ENCODE measurements at regions of chr2 and their contacts with region 1.

Region 1: GRCh38 chr2:127649684-127650040 is 3.7 kb downstream of the GPR17 start:
- DNase-seq: peak; percentile 72 to 78 (median 73)
- H3K4me3 ChIP-seq: no peak overlapping the region
- H3K4me3 Mint-ChIP-seq: peak overlapping the region in 6 of 8 donors; percentile 38 to 70 (median 65)
- H3K27ac ChIP-seq: no peak overlapping the region
- H3K27ac Mint-ChIP-seq: peak overlapping the region in 3 of 7 donors; percentile 49 to 73 (median 52)
- H3K4me1 ChIP-seq: peaks cover 9% of the 10 kb centered on the region
- H3K4me1 Mint-ChIP-seq: peaks cover 12 to 21% (median 16%) of the 10 kb centered on the region in 4 donors
- H3K27me3 ChIP-seq: no peaks in the 10 kb centered on the region
- H3K27me3 Mint-ChIP-seq: no peaks in the 10 kb centered on the region

Region 2: GRCh38 chr2:127197475-127198385 is 451.9 kb before region 1 on chr2:
- CTCF ChIA-PET with region 1: interaction called, 8 read pairs
- POLR2A ChIA-PET with region 1: no interaction called
- intact Hi-C with region 1: loop called (anchors 1 kb)
- DNase-seq: peak in 4 of 5 donors; percentile 24 to 41 (median 34)
- H3K4me3 ChIP-seq: no peak overlapping the region
- H3K4me3 Mint-ChIP-seq: peak overlapping the region; percentile 80 to 94 (median 88)
- H3K27ac ChIP-seq: no peak overlapping the region
- H3K27ac Mint-ChIP-seq: peak overlapping the region in 3 of 7 donors; percentile 8 to 67 (median 48)
- H3K4me1 ChIP-seq: no peaks in the 10 kb centered on the region
- H3K4me1 Mint-ChIP-seq: peaks cover 0 to 7% (median 5%) of the 10 kb centered on the region in 4 donors
- H3K27me3 ChIP-seq: no peaks in the 10 kb centered on the region
- H3K27me3 Mint-ChIP-seq: no peaks in the 10 kb centered on the region

Region 3: DNA sequence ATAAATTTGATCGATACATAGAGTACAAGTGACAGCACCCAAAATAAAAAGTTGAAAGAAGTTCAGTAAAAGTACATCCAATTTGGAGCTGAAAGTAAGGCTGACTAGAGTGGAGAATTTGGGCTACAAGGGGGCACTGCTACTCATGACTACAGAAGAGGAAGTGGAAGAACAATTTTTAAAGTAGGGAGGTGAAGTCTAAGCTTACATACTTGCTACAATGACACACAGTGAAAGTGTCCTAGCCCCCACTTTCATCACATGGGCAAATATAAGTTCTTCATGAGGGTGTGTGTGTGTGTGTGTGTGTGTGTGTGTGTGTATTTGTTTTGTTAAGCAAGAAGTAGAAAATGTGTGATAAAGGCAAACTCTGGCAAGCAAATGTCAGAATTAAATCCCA is 307.6 kb before region 1 on chr2:
- CTCF ChIA-PET with region 1: no interaction called
- POLR2A ChIA-PET with region 1: no interaction called
- intact Hi-C with region 1: loop called (anchors 10 kb)
- DNase-seq: no peak
- H3K4me3 ChIP-seq: no peak overlapping the region
- H3K4me3 Mint-ChIP-seq: no peak overlapping the region
- H3K27ac ChIP-seq: no peak overlapping the region
- H3K27ac Mint-ChIP-seq: peak overlapping the region in 1 of 7 donors; percentile 4
- H3K4me1 ChIP-seq: peaks cover 1% of the 10 kb centered on the region
- H3K4me1 Mint-ChIP-seq: peaks cover 13 to 34% (median 24%) of the 10 kb centered on the region in 4 donors
- H3K27me3 ChIP-seq: no peaks in the 10 kb centered on the region
- H3K27me3 Mint-ChIP-seq: no peaks in the 10 kb centered on the region

Region 4: DNA sequence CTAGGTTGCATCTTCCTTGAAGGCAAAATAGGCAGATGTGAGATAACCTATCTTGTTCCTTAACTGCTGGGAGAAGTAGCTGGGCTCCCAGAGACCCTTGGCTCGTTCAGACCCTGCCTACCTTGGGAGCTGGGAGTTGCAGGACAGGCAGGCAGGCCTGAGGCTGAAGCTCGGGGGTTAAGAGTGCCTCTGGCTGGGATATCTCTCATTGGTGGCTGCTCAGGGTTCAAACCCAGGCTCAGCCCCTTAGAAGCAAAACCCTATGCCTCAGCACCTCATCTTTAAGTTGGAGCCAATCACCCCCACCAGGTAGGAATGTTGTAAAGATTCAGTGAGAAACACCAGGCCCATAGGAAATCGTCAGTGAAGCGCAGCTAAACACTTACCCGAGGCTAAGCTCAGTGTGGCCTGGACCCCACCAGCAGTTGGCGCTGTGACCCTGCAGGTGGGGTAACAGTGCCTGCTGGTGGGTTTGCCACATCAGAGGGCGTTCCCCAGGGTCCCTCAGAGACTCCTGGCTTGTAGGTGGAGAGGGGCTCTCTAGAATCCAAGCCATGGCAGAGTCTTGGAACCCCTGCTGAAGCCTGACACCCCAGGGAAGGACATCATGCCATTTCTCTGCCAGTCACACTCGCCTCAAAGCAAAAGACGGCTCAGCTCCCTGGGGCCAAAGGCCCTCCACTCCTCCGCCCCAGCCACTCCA is 58.3 kb before region 1 on chr2:
- CTCF ChIA-PET with region 1: interaction called, 98 read pairs
- POLR2A ChIA-PET with region 1: interaction called, 8 read pairs
- intact Hi-C with region 1: loop called (anchors 1 kb)
- DNase-seq: peak; percentile 44 to 56 (median 49)
- H3K4me3 ChIP-seq: no peak overlapping the region
- H3K4me3 Mint-ChIP-seq: no peak overlapping the region
- H3K27ac ChIP-seq: no peak overlapping the region
- H3K27ac Mint-ChIP-seq: no peak overlapping the region
- H3K4me1 ChIP-seq: no peaks in the 10 kb centered on the region
- H3K4me1 Mint-ChIP-seq: peaks cover 0 to 10% (median 2%) of the 10 kb centered on the region in 4 donors
- H3K27me3 ChIP-seq: no peaks in the 10 kb centered on the region
- H3K27me3 Mint-ChIP-seq: peaks cover 0 to 2% of the 10 kb centered on the region in 2 donors

Region 5: DNA sequence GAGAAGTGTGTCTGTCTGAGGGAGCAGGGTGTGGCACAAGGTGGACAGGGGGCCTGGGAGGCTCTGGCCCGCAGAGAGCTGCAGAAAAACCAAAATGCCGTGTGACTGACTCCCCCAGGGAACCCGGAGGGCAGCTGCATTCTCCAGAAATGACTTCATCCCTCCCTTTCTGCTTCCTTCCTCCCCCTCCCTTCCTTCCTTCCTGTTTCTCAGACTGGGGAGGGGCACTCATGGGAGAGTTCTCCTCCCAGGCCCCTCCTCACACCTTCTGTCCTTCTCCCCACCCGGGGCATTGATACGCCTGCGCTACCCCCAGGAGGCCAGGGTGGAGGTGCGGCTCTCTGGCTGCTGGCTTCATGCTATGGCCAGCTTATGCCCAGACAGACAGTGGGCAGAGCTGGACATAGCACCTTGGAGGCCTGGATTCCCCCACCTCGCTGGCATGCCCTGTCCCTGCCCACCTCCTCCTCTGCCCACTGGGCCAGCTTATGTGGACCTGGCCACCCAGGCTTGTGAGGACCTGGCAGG is 11.9 kb before region 1 on chr2:
- CTCF ChIA-PET with region 1: interaction called, 69 read pairs
- POLR2A ChIA-PET with region 1: interaction called, 6 read pairs
- intact Hi-C with region 1: no loop called
- DNase-seq: no peak
- H3K4me3 ChIP-seq: no peak overlapping the region
- H3K4me3 Mint-ChIP-seq: peak overlapping the region; percentile 42 to 76 (median 64)
- H3K27ac ChIP-seq: peak overlapping the region; percentile 12
- H3K27ac Mint-ChIP-seq: peak overlapping the region; percentile 68 to 91 (median 86)
- H3K4me1 ChIP-seq: peaks cover 71% of the 10 kb centered on the region
- H3K4me1 Mint-ChIP-seq: peaks cover 11 to 73% (median 40%) of the 10 kb centered on the region in 4 donors
- H3K27me3 ChIP-seq: no peaks in the 10 kb centered on the region
- H3K27me3 Mint-ChIP-seq: no peaks in the 10 kb centered on the region

Measured in CD4-positive, alpha-beta memory T cell (primary cell).